ENCODE measurements at regions of chr19 and their contacts with region 1.

Region 1: DNA sequence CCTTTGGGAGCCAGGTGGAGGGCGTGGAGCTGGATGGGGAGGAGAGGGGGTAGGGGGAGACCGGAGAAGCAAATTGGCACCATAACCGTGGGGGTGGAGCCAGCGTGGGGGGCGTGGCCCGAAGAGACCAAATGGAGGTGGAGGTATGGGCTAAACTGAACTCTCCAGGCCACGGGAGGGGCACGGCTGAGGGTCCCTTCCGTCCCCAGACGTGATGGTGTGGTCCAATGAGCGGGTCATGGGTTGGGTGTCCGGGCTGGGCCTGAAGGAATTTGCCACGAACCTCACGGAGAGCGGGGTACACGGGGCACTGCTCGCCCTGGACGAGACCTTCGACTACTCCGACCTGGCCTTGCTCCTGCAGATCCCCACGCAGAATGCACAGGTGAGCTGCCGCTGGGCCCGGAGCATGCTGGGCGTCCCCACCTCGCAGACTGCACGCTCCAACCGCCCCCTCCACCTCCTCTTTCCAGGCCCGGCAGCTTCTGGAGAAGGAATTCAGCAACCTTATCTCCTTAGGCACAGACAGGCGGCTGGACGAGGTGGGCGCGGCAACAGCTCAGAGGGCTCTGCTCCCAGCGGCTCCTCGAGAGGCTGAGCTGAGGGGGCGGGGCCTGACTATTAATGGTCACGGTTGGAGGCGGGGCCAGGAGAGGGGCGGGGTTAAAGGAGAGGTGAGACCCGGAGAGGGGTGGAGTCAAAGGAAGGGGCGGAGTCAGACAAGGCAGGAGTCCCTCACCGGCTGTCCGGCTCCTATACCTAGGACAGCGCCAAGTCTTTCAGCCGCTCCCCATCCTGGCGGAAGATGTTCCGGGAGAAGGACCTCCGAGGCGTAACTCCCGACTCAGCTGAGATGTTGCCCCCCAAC is 6.2 kb downstream of the HRC start:
- DNase-seq: peak; percentile 100
- H3K4me3 ChIP-seq: peak overlapping the region; percentile 58
- H3K27ac ChIP-seq: peak overlapping the region; percentile 92
- H3K4me1 ChIP-seq: no peaks in the 10 kb centered on the region
- H3K27me3 ChIP-seq: no peaks in the 10 kb centered on the region
- CTCF ChIP-seq: no peak

Region 2: DNA sequence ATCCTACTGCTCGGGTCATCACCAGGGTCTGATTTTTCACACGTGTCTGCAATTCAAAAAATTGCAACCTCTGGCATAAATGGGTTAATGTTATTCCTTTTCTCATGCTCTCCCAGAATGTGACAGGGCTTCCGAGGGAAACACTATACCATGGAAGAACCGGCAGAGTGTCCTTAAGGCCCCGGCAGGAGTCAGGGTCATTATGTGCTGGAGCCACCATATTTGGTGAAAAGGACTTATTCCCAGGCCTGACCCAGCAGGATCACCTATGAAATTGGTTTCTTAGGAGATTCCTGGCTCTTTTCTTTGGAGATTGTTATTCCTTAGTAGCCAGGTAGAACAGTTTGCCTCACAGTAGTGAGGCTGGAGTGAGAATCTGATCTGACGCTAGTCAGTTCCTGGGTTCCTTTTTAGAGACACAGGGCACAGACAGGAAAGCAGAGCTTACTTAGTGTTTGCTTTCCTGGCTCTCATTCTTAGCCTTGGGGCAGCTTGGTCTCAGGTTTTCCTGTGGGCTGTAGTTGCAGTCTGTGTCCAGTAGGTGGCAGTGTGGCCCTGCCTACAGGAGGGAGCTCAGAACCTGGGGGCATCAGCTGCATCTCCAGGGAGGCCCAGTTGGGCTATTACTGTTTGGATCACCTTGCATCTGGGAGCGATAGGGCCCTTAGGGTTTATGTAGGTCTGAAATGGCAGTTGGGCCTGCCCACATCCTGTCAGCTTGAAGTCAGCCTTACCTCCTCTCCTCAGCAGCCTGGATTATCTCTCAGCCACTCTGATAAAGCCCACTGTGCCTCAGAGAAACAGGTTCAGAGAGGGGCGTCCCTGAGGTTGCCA is 51.3 kb before region 1 on chr19:
- intact Hi-C with region 1: loop called (anchors 5 kb)
- DNase-seq: peak; percentile 76
- H3K4me3 ChIP-seq: no peak overlapping the region
- H3K27ac ChIP-seq: no peak overlapping the region
- H3K4me1 ChIP-seq: no peaks in the 10 kb centered on the region
- H3K27me3 ChIP-seq: no peaks in the 10 kb centered on the region
- CTCF ChIP-seq: peak; percentile 99

Region 3: GRCh38 chr19:49107625-49108459 is 41.2 kb before region 1 on chr19:
- intact Hi-C with region 1: no loop called
- DNase-seq: no peak
- H3K4me3 ChIP-seq: no peak overlapping the region
- H3K27ac ChIP-seq: no peak overlapping the region
- H3K4me1 ChIP-seq: no peaks in the 10 kb centered on the region
- H3K27me3 ChIP-seq: no peaks in the 10 kb centered on the region
- CTCF ChIP-seq: no peak